GM13977 (cell line): ENCODE measurements at regions of chr16 and their contacts with region 1.

Region 1: GRCh38 chr16:56324406-56324805 is 100.9 kb downstream of the AMFR start:
- DNase-seq: no peak
- CTCF ChIP-seq: no peak

Region 2: GRCh38 chr16:55944377-55944802 is 380.0 kb before region 1 on chr16:
- in situ Hi-C with region 1: loop called (anchors 10 kb)
- DNase-seq: peak; percentile 20
- CTCF ChIP-seq: peak; percentile 92